Activated CD8-positive, alpha-beta T cell treated with anti-CD3 and anti-CD28 coated beads for 36 hours (primary cell): ENCODE measurements at regions of chr7 and their contacts with region 1.

Region 1: DNA sequence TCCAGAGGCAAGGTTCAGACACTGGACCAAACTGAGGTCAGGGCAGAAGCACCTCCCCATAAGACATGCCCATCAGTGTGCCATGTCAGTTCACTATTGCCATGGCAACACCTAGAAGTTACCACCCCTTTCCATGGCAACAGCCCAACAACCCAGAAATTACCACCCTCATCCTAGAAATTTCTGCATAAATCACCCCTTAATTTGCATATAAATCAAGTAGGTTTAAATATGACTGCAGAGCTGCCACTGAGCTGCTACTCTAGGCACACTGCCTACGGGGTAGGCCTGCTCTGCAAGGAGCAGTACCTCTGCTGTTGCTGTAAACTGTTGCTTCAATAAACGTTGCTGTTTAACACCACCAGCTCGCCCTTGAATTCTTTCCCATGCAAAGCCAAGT is 12.7 kb downstream of the STEAP2 start:
- DNase-seq: no peak
- ATAC-seq: no peak
- H3K4me3 Mint-ChIP-seq: no peak overlapping the region
- H3K27ac Mint-ChIP-seq: no peak overlapping the region
- H3K4me1 Mint-ChIP-seq: no peaks in the 10 kb centered on the region
- H3K27me3 Mint-ChIP-seq: peaks cover 34% of the 10 kb centered on the region
- CTCF ChIP-seq: no peak

Region 2: GRCh38 chr7:90173127-90173844 is 50.9 kb before region 1 on chr7:
- CTCF ChIA-PET with region 1: no interaction called
- POLR2A ChIA-PET with region 1: no interaction called
- intact Hi-C with region 1: no loop called
- DNase-seq: no peak
- ATAC-seq: peak; percentile 68
- H3K4me3 Mint-ChIP-seq: no peak overlapping the region
- H3K27ac Mint-ChIP-seq: peak overlapping the region; percentile 49
- H3K4me1 Mint-ChIP-seq: peaks cover 11% of the 10 kb centered on the region
- H3K27me3 Mint-ChIP-seq: peaks cover 27% of the 10 kb centered on the region
- CTCF ChIP-seq: no peak

Region 3: GRCh38 chr7:90201500-90202195 is 22.5 kb before region 1 on chr7:
- CTCF ChIA-PET with region 1: no interaction called
- POLR2A ChIA-PET with region 1: no interaction called
- intact Hi-C with region 1: no loop called
- DNase-seq: no peak
- ATAC-seq: no peak
- H3K4me3 Mint-ChIP-seq: no peak overlapping the region
- H3K27ac Mint-ChIP-seq: no peak overlapping the region
- H3K4me1 Mint-ChIP-seq: no peaks in the 10 kb centered on the region
- H3K27me3 Mint-ChIP-seq: peaks cover 3% of the 10 kb centered on the region
- CTCF ChIP-seq: no peak

Region 4: GRCh38 chr7:90244909-90245851 is 21.0 kb after region 1 on chr7 and contains the start of gene CFAP69:
- CTCF ChIA-PET with region 1: interaction called, 3 read pairs
- POLR2A ChIA-PET with region 1: no interaction called
- intact Hi-C with region 1: loop called (anchors 2 kb)
- DNase-seq: peak; percentile 92
- ATAC-seq: peak; percentile 93
- H3K4me3 Mint-ChIP-seq: peak within 1 kb of the TSS; percentile 75
- H3K27ac Mint-ChIP-seq: no peak within 1 kb of the TSS
- H3K4me1 Mint-ChIP-seq: peaks cover 11% of the 10 kb centered on the region
- H3K27me3 Mint-ChIP-seq: peaks cover 40% of the 10 kb centered on the region
- CTCF ChIP-seq: no peak
- total RNA-seq, gene CFAP69: 0.07 to 0.69 TPM

Region 5: DNA sequence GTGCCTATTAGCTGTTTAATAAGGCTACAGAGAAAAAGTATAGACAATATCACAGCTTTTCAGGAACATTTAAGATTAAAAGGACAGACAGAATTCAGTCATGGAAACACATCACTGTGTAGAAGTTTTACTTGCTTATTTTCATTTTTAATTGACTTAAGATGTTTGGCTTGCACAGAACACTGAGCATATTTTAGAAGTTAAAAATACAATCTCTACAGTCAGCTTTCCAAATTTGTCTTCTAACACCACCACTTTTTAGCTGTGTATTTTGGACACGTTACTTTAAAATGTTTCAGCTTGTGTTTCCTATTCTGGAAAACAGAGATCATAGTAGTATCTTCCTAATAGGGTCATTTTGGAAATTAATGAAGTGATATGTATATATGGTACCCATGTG is 32.6 kb after region 1 on chr7:
- CTCF ChIA-PET with region 1: no interaction called
- POLR2A ChIA-PET with region 1: no interaction called
- intact Hi-C with region 1: no loop called
- DNase-seq: no peak
- ATAC-seq: no peak
- H3K4me3 Mint-ChIP-seq: no peak overlapping the region
- H3K27ac Mint-ChIP-seq: no peak overlapping the region
- H3K4me1 Mint-ChIP-seq: no peaks in the 10 kb centered on the region
- H3K27me3 Mint-ChIP-seq: peaks cover 23% of the 10 kb centered on the region
- CTCF ChIP-seq: no peak